A673 (cell line): ENCODE measurements at regions of chrX and their contacts with region 1.

Region 1: GRCh38 chrX:23907498-23908218 is at the starts of genes APOO and CXorf58:
- DNase-seq: peak; percentile 94
- H3K4me3 ChIP-seq: peak within 1 kb of the TSS; percentile 74
- H3K27ac ChIP-seq: peak within 1 kb of the TSS; percentile 84
- H3K4me1 ChIP-seq: no peaks in the 10 kb centered on the region
- H3K27me3 ChIP-seq: no peaks in the 10 kb centered on the region
- CTCF ChIP-seq: peak; percentile 75
- total RNA-seq, gene APOO: 74.2 and 79.0 TPM in 2 replicates
- total RNA-seq, gene CXorf58: not detected in 2 replicates

Region 2: DNA sequence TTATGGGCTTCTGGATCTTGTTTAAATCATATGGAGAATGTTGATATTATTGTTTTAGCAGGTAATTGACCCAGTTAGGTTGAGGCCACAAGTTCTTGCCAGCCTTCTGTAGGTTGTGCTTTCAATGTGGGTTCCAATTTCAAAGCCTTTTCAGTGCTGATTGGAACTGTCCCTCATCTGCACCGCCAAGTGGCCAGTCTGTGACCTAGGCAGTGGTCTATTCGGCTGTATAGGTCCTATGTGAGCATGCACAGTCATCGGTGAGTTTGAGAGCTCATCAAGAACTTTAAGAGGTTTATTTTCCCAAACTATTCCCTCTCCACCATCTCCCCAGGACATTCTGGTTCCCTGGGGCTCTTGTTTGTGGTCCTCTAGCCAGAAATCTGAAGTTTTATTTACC is 872.2 kb before region 1 on chrX:
- CTCF ChIA-PET with region 1: no interaction called
- POLR2A ChIA-PET with region 1: no interaction called
- intact Hi-C with region 1: no loop called
- DNase-seq: no peak
- H3K4me3 ChIP-seq: no peak overlapping the region
- H3K27ac ChIP-seq: no peak overlapping the region
- H3K4me1 ChIP-seq: no peaks in the 10 kb centered on the region
- H3K27me3 ChIP-seq: no peaks in the 10 kb centered on the region
- CTCF ChIP-seq: 0 out of 2 replicates have a peak, but pooled peaks have one; percentile 10

Region 3: DNA sequence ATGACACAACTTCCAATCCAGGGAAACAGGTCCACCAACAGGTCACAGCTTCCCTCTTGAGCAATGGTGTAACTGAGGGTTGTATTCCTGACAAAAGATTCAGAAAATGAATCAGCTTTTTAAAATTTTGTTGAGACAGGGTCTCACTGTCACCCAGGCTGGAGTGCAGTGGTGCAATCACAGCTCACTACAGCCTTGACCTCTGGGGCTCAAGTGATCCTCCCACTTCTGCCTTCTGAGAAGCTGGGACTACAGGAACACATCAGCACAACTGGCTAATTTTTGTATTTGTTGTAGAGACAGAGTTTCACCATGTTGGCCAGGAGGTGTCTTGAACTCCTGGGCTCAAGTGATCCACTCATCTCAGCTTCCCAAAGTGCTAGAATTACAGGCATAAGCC is 81.0 kb before region 1 on chrX:
- CTCF ChIA-PET with region 1: no interaction called
- POLR2A ChIA-PET with region 1: no interaction called
- intact Hi-C with region 1: no loop called
- DNase-seq: no peak
- H3K4me3 ChIP-seq: no peak overlapping the region
- H3K27ac ChIP-seq: no peak overlapping the region
- H3K4me1 ChIP-seq: no peaks in the 10 kb centered on the region
- H3K27me3 ChIP-seq: no peaks in the 10 kb centered on the region
- CTCF ChIP-seq: no peak

Region 4: GRCh38 chrX:24024819-24025740 is 117.4 kb after region 1 on chrX:
- CTCF ChIA-PET with region 1: no interaction called
- POLR2A ChIA-PET with region 1: no interaction called
- intact Hi-C with region 1: loop called (anchors 2 kb)
- DNase-seq: peak; percentile 91
- H3K4me3 ChIP-seq: peak overlapping the region; percentile 93
- H3K27ac ChIP-seq: peak overlapping the region; percentile 95
- H3K4me1 ChIP-seq: peaks cover 4% of the 10 kb centered on the region
- H3K27me3 ChIP-seq: peaks cover 4% of the 10 kb centered on the region
- CTCF ChIP-seq: no peak

Region 5: GRCh38 chrX:24594501-24594900 is 686.8 kb after region 1 on chrX:
- CTCF ChIA-PET with region 1: no interaction called
- POLR2A ChIA-PET with region 1: no interaction called
- intact Hi-C with region 1: no loop called
- DNase-seq: no peak
- H3K4me3 ChIP-seq: no peak overlapping the region
- H3K27ac ChIP-seq: no peak overlapping the region
- H3K4me1 ChIP-seq: no peaks in the 10 kb centered on the region
- H3K27me3 ChIP-seq: peaks cover 20% of the 10 kb centered on the region
- CTCF ChIP-seq: no peak